PC-3 (cell line): ENCODE measurements at regions of chr17 and their contacts with region 1.

Region 1: GRCh38 chr17:78250891-78251794 is 19.7 kb downstream of the TMEM235 start:
- DNase-seq: peak; percentile 94
- ATAC-seq: peak; percentile 87
- H3K4me3 ChIP-seq: peak overlapping the region; percentile 54
- H3K27ac ChIP-seq: peak overlapping the region; percentile 75
- H3K4me1 ChIP-seq: peaks cover 18% of the 10 kb centered on the region
- H3K27me3 ChIP-seq: no peaks in the 10 kb centered on the region
- CTCF ChIP-seq: peak; percentile 100

Region 2: GRCh38 chr17:77908501-77908900 is 342.6 kb before region 1 on chr17:
- CTCF ChIA-PET with region 1: interaction called, 10 read pairs
- POLR2A ChIA-PET with region 1: no interaction called
- intact Hi-C with region 1: no loop called
- DNase-seq: no peak
- ATAC-seq: no peak
- H3K4me3 ChIP-seq: no peak overlapping the region
- H3K27ac ChIP-seq: no peak overlapping the region
- H3K4me1 ChIP-seq: no peaks in the 10 kb centered on the region
- H3K27me3 ChIP-seq: peaks cover 65% of the 10 kb centered on the region
- CTCF ChIP-seq: no peak

Region 3: GRCh38 chr17:78082988-78083387 is 168.2 kb before region 1 on chr17:
- CTCF ChIA-PET with region 1: interaction called, 37 read pairs
- POLR2A ChIA-PET with region 1: no interaction called
- intact Hi-C with region 1: loop called (anchors 1 kb)
- DNase-seq: no peak
- ATAC-seq: no peak
- H3K4me3 ChIP-seq: no peak overlapping the region
- H3K27ac ChIP-seq: no peak overlapping the region
- H3K4me1 ChIP-seq: no peaks in the 10 kb centered on the region
- H3K27me3 ChIP-seq: no peaks in the 10 kb centered on the region
- CTCF ChIP-seq: no peak

Region 4: GRCh38 chr17:78186692-78187595 is 64.2 kb before region 1 on chr17 and contains the starts of genes AFMID and TK1:
- CTCF ChIA-PET with region 1: interaction called, 12 read pairs
- POLR2A ChIA-PET with region 1: no interaction called
- intact Hi-C with region 1: loop called (anchors 5 kb)
- DNase-seq: peak; percentile 100
- ATAC-seq: peak; percentile 90
- H3K4me3 ChIP-seq: peak within 1 kb of the TSS; percentile 77
- H3K27ac ChIP-seq: peak within 1 kb of the TSS; percentile 45
- H3K4me1 ChIP-seq: peaks cover 24% of the 10 kb centered on the region
- H3K27me3 ChIP-seq: no peaks in the 10 kb centered on the region
- CTCF ChIP-seq: peak; percentile 76
- total RNA-seq, gene AFMID: 53.1 and 58.9 TPM in 2 replicates
- total RNA-seq, gene TK1: 340 and 430 TPM in 2 replicates

Region 5: DNA sequence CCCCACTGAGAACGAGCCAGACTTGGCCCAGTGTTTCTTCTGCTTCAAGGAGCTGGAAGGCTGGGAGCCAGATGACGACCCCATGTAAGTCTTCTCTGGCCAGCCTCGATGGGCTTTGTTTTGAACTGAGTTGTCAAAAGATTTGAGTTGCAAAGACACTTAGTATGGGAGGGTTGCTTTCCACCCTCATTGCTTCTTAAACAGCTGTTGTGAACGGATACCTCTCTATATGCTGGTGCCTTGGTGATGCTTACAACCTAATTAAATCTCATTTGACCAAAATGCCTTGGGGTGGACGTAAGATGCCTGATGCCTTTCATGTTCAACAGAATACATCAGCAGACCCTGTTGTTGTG is 36.5 kb before region 1 on chr17:
- CTCF ChIA-PET with region 1: interaction called, 7 read pairs
- POLR2A ChIA-PET with region 1: no interaction called
- intact Hi-C with region 1: loop called (anchors 1 kb)
- DNase-seq: no peak
- ATAC-seq: peak; percentile 17
- H3K4me3 ChIP-seq: peak overlapping the region; percentile 100
- H3K27ac ChIP-seq: peak overlapping the region; percentile 72
- H3K4me1 ChIP-seq: peaks cover 13% of the 10 kb centered on the region
- H3K27me3 ChIP-seq: no peaks in the 10 kb centered on the region
- CTCF ChIP-seq: no peak

Region 6: DNA sequence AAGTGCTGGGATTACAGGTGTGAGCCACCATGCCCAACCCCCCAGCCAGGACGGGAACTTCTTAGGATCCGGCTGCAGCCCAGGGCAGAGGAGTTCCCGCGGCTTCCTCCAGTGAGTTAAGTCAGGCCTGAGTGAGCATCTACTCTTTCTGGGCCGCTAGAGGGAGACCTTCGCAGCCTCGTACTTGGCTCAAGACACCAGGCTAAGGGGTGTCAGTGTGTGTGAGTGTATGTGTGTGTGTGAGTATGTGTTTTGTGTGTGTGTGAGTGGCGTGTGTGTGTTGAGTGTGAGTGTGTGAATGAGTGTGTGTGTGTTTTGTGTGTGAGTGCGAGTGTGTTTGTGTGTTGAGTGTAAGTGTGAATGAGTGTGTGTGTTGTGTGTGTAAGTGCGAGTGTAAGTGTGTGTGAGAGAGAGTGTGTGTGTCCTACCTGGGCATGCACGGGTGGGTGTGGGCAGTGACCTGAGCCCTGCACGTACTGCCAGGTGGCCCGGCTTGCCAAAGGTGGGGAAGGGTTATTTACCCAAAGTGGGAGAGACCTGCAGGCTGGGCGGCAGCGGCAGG is 38.7 kb after region 1 on chr17:
- CTCF ChIA-PET with region 1: interaction called, 8 read pairs
- POLR2A ChIA-PET with region 1: no interaction called
- intact Hi-C with region 1: loop called (anchors 1 kb)
- DNase-seq: peak; percentile 94
- ATAC-seq: peak; percentile 93
- H3K4me3 ChIP-seq: no peak overlapping the region
- H3K27ac ChIP-seq: no peak overlapping the region
- H3K4me1 ChIP-seq: peaks cover 13% of the 10 kb centered on the region
- H3K27me3 ChIP-seq: no peaks in the 10 kb centered on the region
- CTCF ChIP-seq: peak; percentile 91

Region 7: DNA sequence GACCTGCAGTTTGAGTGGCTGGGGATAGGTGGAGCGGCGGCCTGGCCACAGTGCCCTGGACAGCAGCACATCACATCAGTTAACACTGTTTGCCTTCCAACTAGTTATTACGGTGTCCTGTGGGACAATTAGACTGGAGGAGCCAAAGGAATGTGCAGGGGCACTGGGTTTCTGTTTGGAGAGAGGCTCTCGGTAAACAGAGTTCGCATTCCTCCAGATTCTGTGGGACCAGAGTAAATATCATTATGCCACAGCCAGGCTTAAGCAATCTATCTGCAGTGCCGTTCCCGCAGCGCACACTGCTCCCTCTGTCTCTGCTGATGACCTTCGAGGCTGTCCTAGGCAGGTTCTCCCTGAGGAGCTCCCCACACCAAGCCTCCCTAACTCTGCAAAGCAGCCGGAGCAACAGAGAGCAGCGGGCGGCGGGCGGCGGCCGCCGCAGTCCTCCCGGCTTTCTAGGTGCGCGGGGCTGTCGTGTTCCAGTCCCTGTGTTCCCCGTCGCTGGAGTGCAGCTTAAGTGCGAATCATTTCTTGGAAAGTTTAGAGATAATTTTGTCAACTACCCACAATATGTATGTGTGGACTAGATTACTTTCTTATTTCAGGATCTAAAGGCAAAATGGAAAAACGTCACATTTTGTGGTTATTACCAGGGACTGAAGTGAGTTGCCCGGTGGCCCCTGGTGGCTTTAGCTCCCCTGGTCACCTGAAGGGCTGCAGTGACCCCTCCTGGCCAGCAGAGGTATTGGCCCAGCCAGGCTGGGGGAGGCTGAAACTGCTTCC is 170.5 kb after region 1 on chr17:
- CTCF ChIA-PET with region 1: interaction called, 14 read pairs
- POLR2A ChIA-PET with region 1: no interaction called
- intact Hi-C with region 1: loop called (anchors 1 kb)
- DNase-seq: peak; percentile 87
- ATAC-seq: peak; percentile 91
- H3K4me3 ChIP-seq: no peak overlapping the region
- H3K27ac ChIP-seq: no peak overlapping the region
- H3K4me1 ChIP-seq: no peaks in the 10 kb centered on the region
- H3K27me3 ChIP-seq: no peaks in the 10 kb centered on the region
- CTCF ChIP-seq: peak; percentile 99

Region 8: GRCh38 chr17:78970834-78971773 is 720.0 kb after region 1 on chr17:
- CTCF ChIA-PET with region 1: no interaction called
- POLR2A ChIA-PET with region 1: no interaction called
- intact Hi-C with region 1: no loop called
- DNase-seq: peak; percentile 91
- ATAC-seq: peak; percentile 61
- H3K4me3 ChIP-seq: no peak overlapping the region
- H3K27ac ChIP-seq: no peak overlapping the region
- H3K4me1 ChIP-seq: peaks cover 8% of the 10 kb centered on the region
- H3K27me3 ChIP-seq: no peaks in the 10 kb centered on the region
- CTCF ChIP-seq: peak; percentile 97